H1 (cell line): ENCODE measurements at regions of chr17 and their contacts with region 1.

Region 1: GRCh38 chr17:309361-309888 is 43.2 kb downstream of the RPH3AL start:
- DNase-seq: peak; percentile 27 to 82
- H3K4me3 ChIP-seq: no peak overlapping the region
- H3K27ac ChIP-seq: no peak overlapping the region
- H3K4me1 ChIP-seq: peaks cover 4 to 26% (median 21%) of the 10 kb centered on the region in 4 experiments
- H3K27me3 ChIP-seq: peaks cover 0 to 1% (median 0%) of the 10 kb centered on the region in 4 experiments; a peak in 1 of 7 replicates
- CTCF ChIP-seq: peak; percentile 51 to 98 (median 79)
- EP300 ChIP-seq: no peak
- POLR2A ChIP-seq: no peak
- RAD21 ChIP-seq: peak; percentile 40 to 63; a peak in 3 of 4 replicates

Region 2: GRCh38 chr17:266701-267667 is 42.4 kb before region 1 on chr17:
- CTCF ChIA-PET with region 1: interaction called, 13 read pairs
- POLR2A ChIA-PET with region 1: no interaction called
- DNase-seq: peak in 1 of 2 experiments; percentile 40
- H3K4me3 ChIP-seq: no peak overlapping the region
- H3K27ac ChIP-seq: no peak overlapping the region
- H3K4me1 ChIP-seq: no peaks in the 10 kb centered on the region
- H3K27me3 ChIP-seq: no peaks in the 10 kb centered on the region; a peak in 1 of 7 replicates
- CTCF ChIP-seq: no peak
- EP300 ChIP-seq: no peak
- POLR2A ChIP-seq: no peak
- RAD21 ChIP-seq: no peak

Region 3: DNA sequence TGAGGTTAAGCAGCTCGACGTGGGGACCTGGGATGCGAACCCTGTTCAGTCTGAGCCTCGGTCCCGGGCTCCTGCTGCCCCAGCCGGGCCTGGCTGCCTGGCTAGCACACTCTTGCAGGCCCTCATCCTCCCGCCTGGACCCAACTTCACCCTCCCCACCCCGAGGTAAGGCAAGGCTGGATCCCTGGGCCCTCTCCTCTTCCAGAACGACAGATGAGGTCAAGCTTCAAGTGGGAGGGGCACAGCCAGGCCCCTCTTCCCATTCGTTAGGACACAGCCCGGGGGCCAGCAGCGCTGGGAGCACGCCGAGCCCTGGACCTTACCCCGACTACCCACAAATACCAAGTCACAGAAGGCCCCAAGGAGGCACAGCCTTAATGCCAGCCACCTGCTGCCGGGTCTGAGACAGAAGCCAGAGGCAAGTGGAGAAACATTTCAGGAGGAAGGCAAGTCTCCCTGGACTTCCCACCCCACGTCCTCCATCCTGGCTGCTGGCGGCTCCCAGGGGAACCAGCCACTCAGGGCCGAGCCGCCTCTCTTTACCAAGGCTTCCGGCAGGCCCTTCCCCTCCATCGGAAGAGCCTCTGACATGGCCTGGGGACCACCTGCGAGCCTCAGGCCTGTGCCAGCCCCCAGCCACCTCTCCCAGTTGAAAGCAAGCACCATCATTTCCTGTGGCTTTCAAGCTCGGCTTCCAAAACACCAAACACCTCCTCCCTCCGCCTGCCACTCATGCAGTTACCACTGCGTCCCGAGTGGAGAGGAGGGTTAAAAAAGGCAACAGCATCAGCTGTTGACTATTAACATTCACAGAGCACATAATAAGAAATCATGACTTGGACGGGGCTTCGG is 16.7 kb before region 1 on chr17:
- CTCF ChIA-PET with region 1: interaction called, 29 read pairs
- POLR2A ChIA-PET with region 1: interaction called, 10 read pairs
- DNase-seq: no peak
- H3K4me3 ChIP-seq: no peak overlapping the region
- H3K27ac ChIP-seq: no peak overlapping the region
- H3K4me1 ChIP-seq: no peaks in the 10 kb centered on the region
- H3K27me3 ChIP-seq: peaks cover 0 to 4% (median 0%) of the 10 kb centered on the region in 4 experiments; a peak in 2 of 7 replicates
- CTCF ChIP-seq: no peak
- EP300 ChIP-seq: no peak
- POLR2A ChIP-seq: no peak
- RAD21 ChIP-seq: no peak

Region 4: DNA sequence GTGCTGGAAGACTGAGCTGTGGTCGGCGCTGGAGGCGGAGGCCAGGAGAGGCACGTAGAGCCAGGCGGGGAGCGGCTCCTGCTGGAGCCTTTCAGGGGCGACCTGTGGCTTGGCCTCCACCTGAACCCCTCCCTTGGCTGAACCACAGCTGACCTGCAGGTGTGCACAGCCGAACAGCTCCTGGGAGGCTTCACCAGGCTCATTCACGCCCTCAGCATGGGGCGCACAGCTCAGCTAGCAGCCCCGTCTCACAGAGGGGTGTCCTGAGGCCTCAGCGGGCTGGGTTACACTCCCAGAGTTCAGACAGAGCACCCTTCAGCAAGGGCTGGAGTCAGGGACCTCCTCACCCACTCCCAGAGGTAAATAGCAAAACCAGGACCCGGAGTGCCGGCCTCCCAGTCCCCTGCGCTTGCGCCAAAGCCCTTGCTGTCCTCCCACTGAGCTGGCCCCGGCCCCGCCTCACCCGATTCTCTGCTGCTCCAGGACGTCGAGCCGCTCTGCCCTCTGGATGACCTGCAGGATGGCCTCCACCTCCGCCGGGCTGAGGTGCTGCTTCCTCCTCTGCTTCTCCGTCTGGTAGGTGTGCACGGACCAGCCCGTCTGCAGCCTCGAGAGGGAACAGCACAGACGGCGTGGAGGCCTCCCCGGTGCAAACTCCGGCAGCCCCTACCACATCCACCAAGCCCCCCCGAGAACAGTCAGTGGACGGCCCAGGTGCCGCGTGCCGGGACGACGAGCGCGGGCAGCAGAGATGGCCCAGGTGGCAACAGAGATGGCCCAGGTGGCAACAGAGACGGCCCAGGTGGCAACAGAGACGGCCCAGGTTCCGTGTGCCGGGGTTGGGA is 11.6 kb after region 1 on chr17:
- CTCF ChIA-PET with region 1: interaction called, 12 read pairs
- POLR2A ChIA-PET with region 1: interaction called, 4 read pairs
- DNase-seq: peak in 1 of 2 experiments; percentile 76
- H3K4me3 ChIP-seq: 0 out of 8 replicates have a peak overlapping the region, but pooled peaks of 1 of the 4 experiments have one; percentile 8
- H3K27ac ChIP-seq: no peak overlapping the region
- H3K4me1 ChIP-seq: peaks cover 3 to 15% (median 6%) of the 10 kb centered on the region in 4 experiments
- H3K27me3 ChIP-seq: no peaks in the 10 kb centered on the region
- CTCF ChIP-seq: 0 out of 4 replicates have a peak, but pooled peaks of 1 of the 3 experiments have one; percentile 4
- EP300 ChIP-seq: no peak
- POLR2A ChIP-seq: no peak
- RAD21 ChIP-seq: 0 out of 4 replicates have a peak, but pooled peaks of 1 of the 2 experiments have one; percentile 16

Region 5: DNA sequence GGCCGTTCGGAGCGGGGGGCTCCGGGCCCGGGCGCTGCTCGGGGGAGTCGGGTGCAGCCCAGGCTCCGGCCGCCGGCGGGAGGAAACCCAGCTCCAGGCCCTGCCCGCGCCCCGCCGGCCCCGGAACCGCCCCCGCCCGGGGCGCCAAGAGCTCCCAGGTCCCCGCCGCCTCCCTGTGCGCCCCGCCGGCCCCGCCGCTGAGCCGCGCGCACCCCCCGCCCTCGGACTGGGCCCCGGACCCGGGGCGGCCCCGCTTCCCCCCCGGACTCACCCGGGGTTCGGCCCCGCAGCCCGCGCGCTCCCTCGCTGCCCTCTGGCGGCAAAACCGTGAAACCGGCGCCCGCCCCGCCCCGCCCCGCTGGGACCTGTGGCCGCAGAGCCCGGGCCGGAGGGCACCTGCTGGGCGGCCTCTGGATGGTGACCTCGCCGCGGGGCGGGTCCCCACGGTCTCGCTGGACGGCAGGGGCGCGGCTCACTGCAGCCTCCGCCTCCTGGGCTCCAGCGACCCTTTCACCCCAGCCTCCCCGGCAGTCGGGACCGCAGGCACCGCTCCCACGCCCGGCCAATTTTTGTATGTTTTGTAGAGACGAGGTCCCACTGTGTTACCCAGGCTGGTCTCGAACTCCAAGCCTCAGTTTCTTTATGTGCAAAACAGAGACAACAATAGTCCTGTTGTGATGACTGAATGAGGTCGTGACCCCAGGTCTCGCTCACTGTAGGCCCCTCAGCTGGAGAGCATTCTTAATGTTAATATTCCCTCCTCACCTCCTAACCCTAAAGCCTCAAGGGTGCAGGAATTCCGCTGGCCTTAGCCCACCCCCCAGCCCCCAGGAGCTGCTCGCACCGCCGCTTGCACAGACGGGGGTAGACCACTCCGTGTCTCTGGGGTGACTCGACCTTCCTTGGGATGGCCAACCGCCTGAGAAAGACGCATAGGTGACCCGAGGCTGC is 76.8 kb after region 1 on chr17:
- CTCF ChIA-PET with region 1: interaction called, 10 read pairs
- POLR2A ChIA-PET with region 1: no interaction called
- DNase-seq: peak in 1 of 2 experiments; percentile 92
- H3K4me3 ChIP-seq: peak overlapping the region; percentile 2 to 58 (median 22); a peak in 6 of 8 replicates
- H3K27ac ChIP-seq: no peak overlapping the region
- H3K4me1 ChIP-seq: peaks cover 5 to 26% (median 18%) of the 10 kb centered on the region in 4 experiments; a peak in 6 of 7 replicates
- H3K27me3 ChIP-seq: peaks cover 9 to 24% (median 22%) of the 10 kb centered on the region in 4 experiments
- CTCF ChIP-seq: peak; percentile 48 to 76 (median 69)
- EP300 ChIP-seq: 0 out of 3 replicates have a peak, but pooled peaks of 1 of the 2 experiments have one; percentile 24
- POLR2A ChIP-seq: no peak
- RAD21 ChIP-seq: peak; percentile 61 to 81

Region 6: GRCh38 chr17:444879-445454 is 135.5 kb after region 1 on chr17:
- CTCF ChIA-PET with region 1: no interaction called
- POLR2A ChIA-PET with region 1: no interaction called
- DNase-seq: no peak
- H3K4me3 ChIP-seq: no peak overlapping the region
- H3K27ac ChIP-seq: no peak overlapping the region
- H3K4me1 ChIP-seq: no peaks in the 10 kb centered on the region; a peak in 1 of 7 replicates
- H3K27me3 ChIP-seq: no peaks in the 10 kb centered on the region
- CTCF ChIP-seq: no peak
- EP300 ChIP-seq: no peak
- POLR2A ChIP-seq: no peak
- RAD21 ChIP-seq: no peak